ENCODE measurements at regions of chr6 and their contacts with region 1.

Region 1: GRCh38 chr6:106085984-106086813 is at the start of gene PRDM1:
- DNase-seq: peak; percentile 89 to 94
- H3K4me3 ChIP-seq: peak within 1 kb of the TSS; percentile 78
- H3K27ac ChIP-seq: peak within 1 kb of the TSS; percentile 87
- H3K4me1 ChIP-seq: peaks cover 43% of the 10 kb centered on the region
- H3K27me3 ChIP-seq: no peaks in the 10 kb centered on the region
- CTCF ChIP-seq: peak; percentile 47
- total RNA-seq, gene PRDM1: 1.4 and 2.6 TPM in 2 replicates

Region 2: GRCh38 chr6:105733565-105734162 is 352.5 kb before region 1 on chr6:
- CTCF ChIA-PET with region 1: no interaction called
- POLR2A ChIA-PET with region 1: no interaction called
- intact Hi-C with region 1: loop called (anchors 2 kb)
- DNase-seq: no peak
- H3K4me3 ChIP-seq: no peak overlapping the region
- H3K27ac ChIP-seq: no peak overlapping the region
- H3K4me1 ChIP-seq: no peaks in the 10 kb centered on the region
- H3K27me3 ChIP-seq: no peaks in the 10 kb centered on the region
- CTCF ChIP-seq: peak; percentile 92

Region 3: GRCh38 chr6:105810105-105810921 is 275.9 kb before region 1 on chr6:
- CTCF ChIA-PET with region 1: no interaction called
- POLR2A ChIA-PET with region 1: no interaction called
- intact Hi-C with region 1: loop called (anchors 5 kb)
- DNase-seq: peak; percentile 73 to 89
- H3K4me3 ChIP-seq: peak overlapping the region; percentile 23; the same call in 1 of the 2 replicates
- H3K27ac ChIP-seq: peak overlapping the region; percentile 85
- H3K4me1 ChIP-seq: peaks cover 41% of the 10 kb centered on the region
- H3K27me3 ChIP-seq: no peaks in the 10 kb centered on the region
- CTCF ChIP-seq: no peak

Region 4: DNA sequence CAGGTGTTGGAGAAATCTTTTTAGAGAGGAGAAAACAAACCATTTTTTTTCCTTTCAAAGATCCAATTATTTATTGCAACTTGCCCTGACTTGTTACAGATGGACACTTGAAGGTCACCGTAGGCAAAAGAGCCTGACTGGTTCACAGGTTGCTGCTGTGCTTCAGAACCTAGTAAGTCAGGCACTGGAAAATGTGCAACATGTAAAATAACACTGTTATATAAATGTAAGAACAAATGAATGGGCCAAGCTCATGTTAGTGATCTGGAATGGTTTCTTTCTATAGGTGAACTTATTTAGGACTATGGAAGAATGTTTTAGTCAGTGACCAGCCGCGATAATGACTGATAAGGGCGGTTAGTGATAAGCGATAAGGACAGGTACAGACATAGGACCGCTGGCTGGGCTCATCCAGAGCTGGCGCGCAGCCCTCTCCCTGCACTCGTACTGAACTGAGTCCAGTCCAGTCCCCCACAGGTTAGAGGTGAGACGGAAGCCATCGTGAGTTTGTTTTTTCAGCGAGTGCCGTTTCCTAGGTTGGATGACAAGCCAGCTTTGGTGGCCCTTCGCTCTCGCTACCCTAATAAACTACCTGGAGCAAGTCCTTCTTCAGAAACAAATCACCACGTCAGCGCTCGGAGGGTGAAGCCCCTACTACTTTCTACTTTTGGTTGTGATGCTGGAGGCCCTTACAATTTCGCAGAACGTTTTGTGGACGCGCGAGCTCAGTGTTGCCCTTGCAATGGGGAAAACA is 94.5 kb before region 1 on chr6:
- CTCF ChIA-PET with region 1: no interaction called
- POLR2A ChIA-PET with region 1: no interaction called
- intact Hi-C with region 1: no loop called
- DNase-seq: peak; percentile 22 to 40
- H3K4me3 ChIP-seq: peak overlapping the region; percentile 83
- H3K27ac ChIP-seq: no peak overlapping the region
- H3K4me1 ChIP-seq: 0 out of 2 replicates have a peak, but pooled peaks cover 4% of the 10 kb centered on the region
- H3K27me3 ChIP-seq: no peaks in the 10 kb centered on the region
- CTCF ChIP-seq: no peak

Region 5: DNA sequence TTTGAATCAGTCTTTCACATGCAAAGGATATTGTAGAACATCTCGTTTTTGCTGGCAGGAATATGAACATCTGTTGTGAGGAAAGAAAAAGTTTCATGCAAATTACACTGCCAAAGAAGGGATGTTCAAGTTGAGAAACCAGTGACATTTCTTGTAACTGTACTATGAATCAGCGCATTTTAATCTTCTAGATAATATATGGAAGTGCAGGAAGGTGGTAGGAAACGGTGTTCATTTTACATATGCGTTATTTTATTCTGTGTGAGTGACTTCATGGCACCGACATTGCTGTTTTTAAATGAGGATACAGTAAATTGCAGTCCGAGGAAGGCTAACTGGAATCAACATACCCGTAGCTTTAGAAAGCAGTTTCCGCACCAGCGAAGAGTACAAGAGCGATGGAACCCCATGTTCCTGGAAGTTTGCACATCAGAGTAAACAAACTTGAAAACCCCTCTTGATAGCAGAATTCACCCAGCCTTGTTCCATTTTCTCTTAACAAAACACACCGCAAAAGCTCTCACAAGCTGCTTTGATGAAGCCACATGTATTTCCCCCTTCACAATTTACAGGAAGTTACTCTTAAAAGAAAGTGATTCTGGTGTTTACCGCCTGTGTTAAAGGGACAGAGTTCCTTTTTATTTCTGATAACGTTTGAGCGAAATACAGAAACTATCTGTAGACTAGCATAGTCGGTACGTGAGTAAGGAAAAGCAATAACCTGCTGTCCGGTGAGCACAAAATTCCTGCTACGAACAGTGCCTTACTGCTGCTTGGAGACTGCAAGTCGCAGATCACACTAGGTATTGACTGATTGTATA is 11.4 kb after region 1 on chr6:
- CTCF ChIA-PET with region 1: interaction called, 3 read pairs
- POLR2A ChIA-PET with region 1: interaction called, 4 read pairs
- intact Hi-C with region 1: loop called (anchors 1 kb)
- DNase-seq: no peak
- H3K4me3 ChIP-seq: peak overlapping the region; percentile 60
- H3K27ac ChIP-seq: peak overlapping the region; percentile 50
- H3K4me1 ChIP-seq: peaks cover 40% of the 10 kb centered on the region
- H3K27me3 ChIP-seq: no peaks in the 10 kb centered on the region
- CTCF ChIP-seq: no peak

Region 6: DNA sequence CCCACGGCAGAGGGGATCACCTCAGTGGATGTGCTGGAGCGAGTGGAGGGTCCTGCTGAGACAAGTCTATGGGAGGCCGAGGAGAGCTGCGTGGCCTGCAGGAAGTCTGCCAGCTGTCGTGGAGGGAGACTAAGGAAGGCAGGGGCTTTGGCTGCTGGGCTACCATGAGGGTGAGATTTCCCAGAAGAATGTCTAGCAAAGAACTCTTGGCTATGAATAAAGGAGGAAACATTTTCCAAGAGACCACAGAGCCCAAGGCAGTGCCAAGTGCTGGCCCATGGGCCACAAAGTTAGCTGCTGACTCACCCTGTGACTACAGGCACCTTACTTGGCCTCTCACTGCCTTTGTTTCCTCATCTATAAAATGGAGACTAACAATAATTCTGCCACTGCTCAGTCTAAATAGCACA is 73.3 kb after region 1 on chr6:
- CTCF ChIA-PET with region 1: no interaction called
- POLR2A ChIA-PET with region 1: interaction called, 18 read pairs
- intact Hi-C with region 1: no loop called
- DNase-seq: peak; percentile 44 to 72
- H3K4me3 ChIP-seq: no peak overlapping the region
- H3K27ac ChIP-seq: no peak overlapping the region
- H3K4me1 ChIP-seq: peaks cover 13% of the 10 kb centered on the region
- H3K27me3 ChIP-seq: no peaks in the 10 kb centered on the region
- CTCF ChIP-seq: no peak